T-cell (primary cell): ENCODE measurements at regions of chr1 and their contacts with region 1.

Region 1: DNA sequence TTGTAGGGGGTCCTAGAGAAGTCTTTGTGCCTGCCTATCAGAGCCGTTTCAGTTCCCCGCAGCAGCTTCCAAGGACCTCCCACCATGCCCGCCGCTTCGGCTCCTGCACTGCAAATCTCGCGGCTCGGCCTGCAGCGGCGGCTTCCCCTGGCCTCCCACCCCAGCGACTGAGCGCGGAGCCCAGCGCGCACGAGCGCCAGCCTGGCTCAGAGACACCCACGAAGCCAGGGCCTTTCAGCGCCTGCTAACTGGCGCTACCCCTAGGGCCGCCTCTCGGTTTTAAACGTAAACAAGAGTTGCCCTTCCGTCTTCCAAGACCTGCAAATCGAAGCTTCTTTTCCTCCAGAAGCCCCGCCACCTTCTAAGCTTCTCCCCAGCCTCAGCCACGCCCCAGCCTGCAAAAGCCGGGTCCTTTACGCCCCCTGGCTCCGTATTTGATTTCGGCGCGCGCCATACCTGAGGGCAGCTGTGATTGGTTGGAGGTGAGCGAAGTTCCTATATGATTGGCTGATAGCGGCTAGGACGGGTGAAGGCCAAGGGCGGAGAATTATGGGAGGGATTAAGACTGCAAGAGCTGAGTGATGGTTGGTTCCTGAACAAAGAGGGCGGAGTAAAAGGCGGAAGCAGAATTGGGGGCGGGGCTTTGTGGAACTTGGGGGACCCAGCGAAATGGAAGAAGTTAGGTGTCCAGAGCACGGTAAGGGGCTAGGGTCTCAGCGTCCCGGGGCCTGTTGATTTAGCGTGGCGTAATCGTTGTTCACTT is at the start of gene TTF2:
- DNase-seq: peak; percentile 87 to 99 (median 96)
- ATAC-seq: peak; percentile 91 to 96 (median 94)
- H3K4me3 ChIP-seq: peak within 1 kb of the TSS; percentile 70 to 83
- H3K4me3 Mint-ChIP-seq: no peak within 1 kb of the TSS
- H3K27ac ChIP-seq: peak within 1 kb of the TSS; percentile 85
- H3K27ac Mint-ChIP-seq: peak within 1 kb of the TSS; percentile 39 to 77
- H3K4me1 ChIP-seq: peaks cover 12 to 15% of the 10 kb centered on the region in 2 experiments
- H3K4me1 Mint-ChIP-seq: peaks cover 44 to 48% (median 46%) of the 10 kb centered on the region in 3 donors
- H3K27me3 ChIP-seq: no peaks in the 10 kb centered on the region
- H3K27me3 Mint-ChIP-seq: no peaks in the 10 kb centered on the region
- total RNA-seq, gene TTF2: 26.7 to 37.1 (median 33.8) TPM

Region 2: GRCh38 chr1:116448813-116449281 is 611.0 kb before region 1 on chr1:
- CTCF ChIA-PET with region 1: no interaction called
- POLR2A ChIA-PET with region 1: no interaction called
- DNase-seq: no peak
- ATAC-seq: no peak
- H3K4me3 ChIP-seq: no peak overlapping the region
- H3K4me3 Mint-ChIP-seq: no peak overlapping the region
- H3K27ac ChIP-seq: no peak overlapping the region
- H3K27ac Mint-ChIP-seq: no peak overlapping the region
- H3K4me1 ChIP-seq: no peaks in the 10 kb centered on the region
- H3K4me1 Mint-ChIP-seq: no peaks in the 10 kb centered on the region
- H3K27me3 ChIP-seq: peaks cover 0 to 8% of the 10 kb centered on the region in 2 experiments
- H3K27me3 Mint-ChIP-seq: peaks cover 9 to 11% of the 10 kb centered on the region in 2 donors

Region 3: GRCh38 chr1:116724765-116725375 is 335.0 kb before region 1 on chr1:
- CTCF ChIA-PET with region 1: interaction called, 8 to 12 read pairs
- POLR2A ChIA-PET with region 1: no interaction called
- DNase-seq: peak; percentile 46 to 89 (median 71)
- ATAC-seq: peak; percentile 61 to 68 (median 62)
- H3K4me3 ChIP-seq: no peak overlapping the region
- H3K4me3 Mint-ChIP-seq: no peak overlapping the region
- H3K27ac ChIP-seq: no peak overlapping the region
- H3K27ac Mint-ChIP-seq: no peak overlapping the region
- H3K4me1 ChIP-seq: peaks cover 0 to 10% of the 10 kb centered on the region in 2 experiments
- H3K4me1 Mint-ChIP-seq: peaks cover 10 to 18% (median 17%) of the 10 kb centered on the region in 3 donors
- H3K27me3 ChIP-seq: peaks cover 0 to 2% of the 10 kb centered on the region in 2 experiments
- H3K27me3 Mint-ChIP-seq: no peaks in the 10 kb centered on the region

Region 4: GRCh38 chr1:116943438-116943837 is 116.4 kb before region 1 on chr1:
- CTCF ChIA-PET with region 1: interaction called in 1 of 2 experiments, 12 read pairs
- POLR2A ChIA-PET with region 1: no interaction called
- DNase-seq: no peak
- ATAC-seq: no peak
- H3K4me3 ChIP-seq: no peak overlapping the region
- H3K4me3 Mint-ChIP-seq: no peak overlapping the region
- H3K27ac ChIP-seq: no peak overlapping the region
- H3K27ac Mint-ChIP-seq: no peak overlapping the region
- H3K4me1 ChIP-seq: peaks cover 4 to 8% of the 10 kb centered on the region in 2 experiments
- H3K4me1 Mint-ChIP-seq: peaks cover 20 to 24% (median 21%) of the 10 kb centered on the region in 3 donors
- H3K27me3 ChIP-seq: no peaks in the 10 kb centered on the region
- H3K27me3 Mint-ChIP-seq: no peaks in the 10 kb centered on the region

Region 5: DNA sequence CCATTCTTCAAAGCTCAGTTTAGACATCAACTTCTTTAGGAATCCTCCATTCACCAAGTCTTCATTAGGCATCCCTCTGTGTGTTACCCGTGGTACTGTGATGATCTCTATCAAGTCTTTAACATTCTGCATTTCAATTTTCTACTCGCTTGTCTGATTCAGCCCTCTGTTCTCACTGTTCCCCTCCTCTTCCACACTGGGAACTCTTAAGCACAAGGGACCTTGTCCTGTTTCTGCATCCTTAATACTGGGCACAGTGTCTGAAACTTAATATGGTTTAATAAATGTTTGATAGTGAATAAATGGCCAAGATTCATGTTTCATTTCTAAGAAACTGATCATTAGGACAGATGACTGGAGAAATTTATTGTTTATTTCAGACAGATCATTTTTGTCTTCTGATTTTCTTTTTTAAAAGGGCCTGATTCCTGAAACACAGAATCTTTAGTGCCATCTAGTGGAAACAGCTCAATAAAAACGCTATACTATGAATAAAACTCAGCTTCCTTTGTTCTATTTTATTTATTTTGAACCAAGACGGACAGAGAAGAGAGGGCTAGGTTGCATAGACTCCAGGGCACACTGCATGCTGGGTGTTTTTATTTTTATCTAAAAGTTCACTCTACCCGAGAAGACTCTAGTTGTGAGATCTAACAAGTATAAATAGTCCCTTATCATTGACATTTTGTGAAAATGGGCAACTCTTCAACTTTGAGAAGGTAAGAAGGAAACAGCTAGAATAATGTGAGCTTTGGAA is 68.6 kb after region 1 on chr1:
- CTCF ChIA-PET with region 1: interaction called in 1 of 2 experiments, 14 read pairs
- POLR2A ChIA-PET with region 1: interaction called in 1 of 2 experiments, 5 read pairs
- DNase-seq: peak in 1 of 35 experiments; percentile 52
- ATAC-seq: peak in 2 of 4 experiments; percentile 32 to 57
- H3K4me3 ChIP-seq: no peak overlapping the region
- H3K4me3 Mint-ChIP-seq: no peak overlapping the region
- H3K27ac ChIP-seq: no peak overlapping the region
- H3K27ac Mint-ChIP-seq: no peak overlapping the region
- H3K4me1 ChIP-seq: no peaks in the 10 kb centered on the region
- H3K4me1 Mint-ChIP-seq: peaks cover 0 to 2% (median 2%) of the 10 kb centered on the region in 3 donors
- H3K27me3 ChIP-seq: peaks cover 0 to 8% of the 10 kb centered on the region in 2 experiments
- H3K27me3 Mint-ChIP-seq: peaks cover 0 to 8% of the 10 kb centered on the region in 2 donors

Region 6: DNA sequence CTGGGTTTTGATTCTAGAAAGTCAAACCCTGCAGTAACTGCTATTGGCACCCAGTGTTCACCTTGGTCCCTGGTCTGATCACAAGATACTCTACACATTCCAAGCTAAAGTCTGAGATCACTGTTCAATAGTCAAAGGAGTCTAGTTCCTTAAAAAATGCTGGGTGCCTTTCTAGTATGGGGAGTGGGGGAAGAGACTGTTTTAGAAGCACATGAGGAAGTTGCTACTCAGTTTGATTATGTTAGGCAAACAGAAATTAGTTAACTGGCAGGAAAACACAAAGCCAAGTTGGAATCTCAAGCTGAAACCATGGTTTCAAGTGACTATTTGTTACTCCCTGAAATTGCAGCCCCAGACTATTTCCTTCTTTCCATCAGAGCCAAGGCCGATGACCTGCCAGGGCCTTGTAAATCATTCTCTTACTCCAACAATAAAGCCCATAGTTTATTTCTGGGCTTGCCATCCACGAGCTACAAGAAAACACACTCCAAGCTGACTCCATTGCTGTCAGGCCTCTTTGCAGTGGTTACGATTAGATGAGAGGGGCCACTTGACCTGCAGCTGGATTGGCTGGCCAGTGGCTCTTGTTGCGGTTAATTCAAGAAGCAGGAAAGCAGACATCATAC is 172.0 kb after region 1 on chr1:
- CTCF ChIA-PET with region 1: no interaction called
- POLR2A ChIA-PET with region 1: no interaction called
- DNase-seq: no peak
- ATAC-seq: no peak
- H3K4me3 ChIP-seq: no peak overlapping the region
- H3K4me3 Mint-ChIP-seq: no peak overlapping the region
- H3K27ac ChIP-seq: no peak overlapping the region
- H3K27ac Mint-ChIP-seq: no peak overlapping the region
- H3K4me1 ChIP-seq: no peaks in the 10 kb centered on the region
- H3K4me1 Mint-ChIP-seq: no peaks in the 10 kb centered on the region
- H3K27me3 ChIP-seq: peaks cover 0 to 2% of the 10 kb centered on the region in 2 experiments
- H3K27me3 Mint-ChIP-seq: peaks cover 8 to 10% of the 10 kb centered on the region in 2 donors

Region 7: DNA sequence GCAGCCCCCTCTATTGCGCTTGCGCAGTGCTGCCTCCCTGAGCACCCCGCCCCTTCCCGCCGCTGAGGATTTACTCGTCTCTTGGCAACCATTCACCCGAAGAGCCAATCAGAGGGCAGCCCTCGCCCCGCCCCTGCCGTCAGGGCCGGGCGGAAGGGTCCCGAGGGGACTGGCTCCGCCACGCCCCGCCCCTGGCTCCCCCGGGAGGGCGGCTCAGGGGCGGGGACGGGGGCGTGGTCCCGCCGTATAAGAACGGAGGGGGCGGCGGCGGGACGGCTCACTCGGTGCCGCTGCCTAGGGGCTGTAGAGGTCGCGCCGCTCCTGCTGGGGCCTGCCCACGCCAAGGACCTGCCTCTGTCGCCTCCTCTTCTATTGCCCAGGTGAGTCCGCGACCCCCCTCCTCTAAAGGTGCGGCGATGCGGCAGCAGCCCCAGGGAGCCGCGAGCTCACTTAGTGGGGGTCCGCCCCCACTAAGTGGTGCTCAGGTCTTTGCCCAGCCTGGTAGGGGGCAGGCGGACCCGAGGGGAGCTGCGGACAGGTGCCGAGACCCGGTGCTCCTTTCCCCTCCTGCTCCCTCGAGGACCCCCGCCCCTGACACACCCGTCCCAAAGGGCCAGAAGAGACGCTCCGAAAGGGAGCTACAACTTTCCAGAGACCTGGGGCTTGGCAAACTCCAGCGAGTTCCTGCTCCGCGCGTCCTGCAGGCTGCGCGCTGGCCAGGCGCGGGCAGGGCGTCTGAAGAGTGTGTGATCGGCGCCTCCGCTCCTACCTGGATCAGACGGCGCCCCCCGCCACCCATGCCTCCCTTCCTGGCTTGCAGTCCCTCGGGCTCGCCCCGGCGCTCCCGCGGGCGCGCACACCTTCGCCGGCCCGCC is 546.2 kb after region 1 on chr1 and contains the start of gene TENT5C:
- CTCF ChIA-PET with region 1: no interaction called
- POLR2A ChIA-PET with region 1: interaction called in 1 of 2 experiments, 12 read pairs
- DNase-seq: peak; percentile 96 to 99 (median 98)
- ATAC-seq: peak; percentile 90 to 96 (median 92)
- H3K4me3 ChIP-seq: peak within 1 kb of the TSS; percentile 91 to 92
- H3K4me3 Mint-ChIP-seq: peak within 1 kb of the TSS; percentile 97 to 98 (median 98)
- H3K27ac ChIP-seq: peak within 1 kb of the TSS; percentile 94
- H3K27ac Mint-ChIP-seq: peak within 1 kb of the TSS; percentile 95 to 98
- H3K4me1 ChIP-seq: peaks cover 11 to 32% of the 10 kb centered on the region in 2 experiments
- H3K4me1 Mint-ChIP-seq: peaks cover 41 to 52% (median 45%) of the 10 kb centered on the region in 3 donors
- H3K27me3 ChIP-seq: peaks cover 2% of the 10 kb centered on the region in 2 experiments
- H3K27me3 Mint-ChIP-seq: no peaks in the 10 kb centered on the region
- total RNA-seq, gene TENT5C: 7.6 to 133 (median 11.2) TPM

Region 8: DNA sequence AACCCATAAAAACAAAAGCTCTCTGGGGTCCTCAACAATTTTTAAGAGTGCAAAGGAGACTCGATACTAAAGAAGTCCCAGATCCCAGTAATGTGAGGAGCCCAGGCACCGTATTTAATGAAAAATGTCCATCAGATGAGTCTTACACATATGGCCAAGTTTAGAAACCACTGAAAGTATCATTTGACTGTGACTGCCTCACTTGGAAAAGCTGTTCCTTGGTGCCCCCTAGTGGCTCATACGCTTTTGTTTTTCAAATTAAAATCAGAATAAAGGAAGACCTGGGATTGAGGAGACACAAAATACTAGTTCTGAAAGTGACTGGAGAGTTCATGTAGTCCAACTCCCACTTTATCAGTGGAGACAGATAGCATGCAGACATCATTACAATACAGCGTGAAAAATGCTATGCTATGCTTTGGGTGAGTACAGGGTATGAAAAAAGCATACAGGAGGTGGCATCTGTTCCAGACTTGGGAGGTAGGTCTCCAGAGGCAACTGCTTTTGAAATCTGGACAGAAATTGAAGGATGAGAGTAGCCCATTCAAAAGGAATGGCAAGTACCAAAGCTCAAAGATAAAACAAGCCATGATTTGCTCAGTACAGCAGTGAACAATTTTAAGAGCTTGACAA is 835.7 kb after region 1 on chr1:
- CTCF ChIA-PET with region 1: interaction called in 1 of 2 experiments, 3 read pairs
- POLR2A ChIA-PET with region 1: interaction called in 1 of 2 experiments, 21 read pairs
- DNase-seq: peak in 31 of 35 experiments; percentile 7 to 72 (median 44)
- ATAC-seq: peak in 1 of 4 experiments; percentile 48
- H3K4me3 ChIP-seq: no peak overlapping the region
- H3K4me3 Mint-ChIP-seq: no peak overlapping the region
- H3K27ac ChIP-seq: no peak overlapping the region
- H3K27ac Mint-ChIP-seq: no peak overlapping the region
- H3K4me1 ChIP-seq: no peaks in the 10 kb centered on the region
- H3K4me1 Mint-ChIP-seq: peaks cover 2 to 5% (median 2%) of the 10 kb centered on the region in 3 donors
- H3K27me3 ChIP-seq: no peaks in the 10 kb centered on the region
- H3K27me3 Mint-ChIP-seq: no peaks in the 10 kb centered on the region